Naive thymus-derived CD4-positive, alpha-beta T cell (primary cell): ENCODE measurements at regions of chr1 and their contacts with region 1.

Region 1: GRCh38 chr1:90568436-90568835 is 148.7 kb downstream of the BARHL2 start:
- DNase-seq: no peak
- ATAC-seq: no peak
- H3K4me3 ChIP-seq: no peak overlapping the region
- H3K4me3 Mint-ChIP-seq: no peak overlapping the region
- H3K27ac ChIP-seq: no peak overlapping the region
- H3K27ac Mint-ChIP-seq: no peak overlapping the region
- H3K4me1 ChIP-seq: no peaks in the 10 kb centered on the region
- H3K4me1 Mint-ChIP-seq: peaks cover 0 to 1% (median 0%) of the 10 kb centered on the region in 7 donors
- H3K27me3 ChIP-seq: peaks cover 0 to 4% of the 10 kb centered on the region in 2 donors
- H3K27me3 Mint-ChIP-seq: peaks cover 0 to 42% (median 19%) of the 10 kb centered on the region in 5 donors

Region 2: DNA sequence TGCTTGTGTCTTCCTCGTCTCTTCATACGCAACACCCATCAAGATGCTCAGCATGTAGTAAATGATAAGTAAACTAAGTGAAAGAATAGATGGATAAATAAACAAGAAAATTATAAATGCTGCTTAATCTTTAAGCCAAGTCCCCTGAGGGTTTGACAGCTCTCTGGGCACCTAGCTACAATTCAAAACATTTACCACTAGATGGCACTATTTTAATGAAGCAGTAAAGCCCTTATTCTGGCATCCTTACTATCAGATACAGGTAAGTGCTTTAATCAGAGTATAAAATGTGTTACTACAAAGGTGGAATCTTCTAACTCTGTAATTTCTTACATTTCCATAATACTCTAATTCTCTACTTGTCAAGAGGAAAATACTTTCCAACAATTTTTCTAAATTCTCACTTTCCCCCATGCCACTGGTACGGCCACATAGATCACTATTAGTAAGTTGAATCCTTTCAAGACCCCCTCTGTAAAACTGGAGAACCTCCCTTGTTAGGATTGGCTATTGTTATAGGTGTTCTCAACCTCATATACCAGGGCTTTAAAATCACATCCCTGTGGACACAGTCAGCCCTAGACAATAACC is 10.9 kb after region 1 on chr1:
- CTCF ChIA-PET with region 1: interaction called, 13 read pairs
- POLR2A ChIA-PET with region 1: no interaction called
- intact Hi-C with region 1: no loop called
- DNase-seq: peak in 6 of 9 donors; percentile 12 to 49 (median 34)
- ATAC-seq: no peak
- H3K4me3 ChIP-seq: no peak overlapping the region
- H3K4me3 Mint-ChIP-seq: no peak overlapping the region
- H3K27ac ChIP-seq: no peak overlapping the region
- H3K27ac Mint-ChIP-seq: no peak overlapping the region
- H3K4me1 ChIP-seq: no peaks in the 10 kb centered on the region
- H3K4me1 Mint-ChIP-seq: no peaks in the 10 kb centered on the region
- H3K27me3 ChIP-seq: no peaks in the 10 kb centered on the region
- H3K27me3 Mint-ChIP-seq: peaks cover 0 to 7% (median 4%) of the 10 kb centered on the region in 5 donors